IMR-90 (cell line): ENCODE measurements at regions of chr19 and their contacts with region 1.

Region 1: GRCh38 chr19:48513289-48514122 is 1.9 kb upstream of the LMTK3 start:
- DNase-seq: peak; percentile 64
- ATAC-seq: peak; percentile 87
- H3K4me3 ChIP-seq: peak overlapping the region; percentile 57
- H3K27ac ChIP-seq: peak overlapping the region; percentile 13; the same call in 1 of the 2 replicates
- H3K4me1 ChIP-seq: no peaks in the 10 kb centered on the region
- H3K27me3 ChIP-seq: peaks cover 17% of the 10 kb centered on the region
- CTCF ChIP-seq: no peak
- POLR2A ChIP-seq: no peak
- RAD21 ChIP-seq: no peak

Region 2: DNA sequence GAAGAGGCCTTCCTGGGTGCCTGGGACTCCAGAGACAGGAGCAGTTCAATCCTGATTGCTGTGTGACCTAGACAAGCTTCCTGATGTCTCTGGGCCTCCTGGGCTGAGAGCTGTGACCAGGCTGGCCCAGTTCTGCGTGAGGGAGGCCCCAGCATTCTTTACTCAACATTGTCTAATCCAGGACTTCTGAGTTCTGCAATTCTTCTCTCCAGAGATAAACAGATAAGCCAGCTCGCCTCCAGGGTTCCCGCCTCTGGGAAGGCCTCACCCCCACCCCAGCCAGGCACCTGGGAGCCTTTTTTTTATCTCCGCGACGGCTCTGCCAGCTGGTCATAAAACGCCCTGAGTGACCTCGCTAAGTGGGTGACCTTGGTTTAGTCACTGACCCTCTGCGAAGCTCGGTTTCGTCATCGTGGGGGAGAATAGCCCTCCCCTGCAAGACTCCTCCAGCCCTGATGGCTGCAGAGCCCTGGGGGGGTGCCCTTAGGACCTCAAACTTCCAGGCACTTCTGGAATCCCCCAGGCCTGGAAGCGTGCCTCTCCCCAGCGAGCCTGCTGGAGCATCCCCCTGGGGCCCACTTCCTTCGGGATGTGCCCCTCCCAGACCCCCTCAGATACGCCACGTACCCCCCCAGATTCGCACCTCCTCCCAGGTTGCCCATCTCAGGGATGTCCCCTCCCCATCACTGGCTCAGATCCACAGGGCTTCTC is 40.3 kb after region 1 on chr19:
- CTCF ChIA-PET with region 1: no interaction called
- POLR2A ChIA-PET with region 1: no interaction called
- dilution Hi-C with region 1: no loop called
- in situ Hi-C with region 1: no loop called
- intact Hi-C with region 1: loop called (anchors 5 kb)
- DNase-seq: peak; percentile 86
- ATAC-seq: peak; percentile 86
- H3K4me3 ChIP-seq: no peak overlapping the region
- H3K27ac ChIP-seq: no peak overlapping the region
- H3K4me1 ChIP-seq: peaks cover 8% of the 10 kb centered on the region
- H3K27me3 ChIP-seq: peaks cover 5% of the 10 kb centered on the region
- CTCF ChIP-seq: no peak
- POLR2A ChIP-seq: no peak
- RAD21 ChIP-seq: no peak

Region 3: DNA sequence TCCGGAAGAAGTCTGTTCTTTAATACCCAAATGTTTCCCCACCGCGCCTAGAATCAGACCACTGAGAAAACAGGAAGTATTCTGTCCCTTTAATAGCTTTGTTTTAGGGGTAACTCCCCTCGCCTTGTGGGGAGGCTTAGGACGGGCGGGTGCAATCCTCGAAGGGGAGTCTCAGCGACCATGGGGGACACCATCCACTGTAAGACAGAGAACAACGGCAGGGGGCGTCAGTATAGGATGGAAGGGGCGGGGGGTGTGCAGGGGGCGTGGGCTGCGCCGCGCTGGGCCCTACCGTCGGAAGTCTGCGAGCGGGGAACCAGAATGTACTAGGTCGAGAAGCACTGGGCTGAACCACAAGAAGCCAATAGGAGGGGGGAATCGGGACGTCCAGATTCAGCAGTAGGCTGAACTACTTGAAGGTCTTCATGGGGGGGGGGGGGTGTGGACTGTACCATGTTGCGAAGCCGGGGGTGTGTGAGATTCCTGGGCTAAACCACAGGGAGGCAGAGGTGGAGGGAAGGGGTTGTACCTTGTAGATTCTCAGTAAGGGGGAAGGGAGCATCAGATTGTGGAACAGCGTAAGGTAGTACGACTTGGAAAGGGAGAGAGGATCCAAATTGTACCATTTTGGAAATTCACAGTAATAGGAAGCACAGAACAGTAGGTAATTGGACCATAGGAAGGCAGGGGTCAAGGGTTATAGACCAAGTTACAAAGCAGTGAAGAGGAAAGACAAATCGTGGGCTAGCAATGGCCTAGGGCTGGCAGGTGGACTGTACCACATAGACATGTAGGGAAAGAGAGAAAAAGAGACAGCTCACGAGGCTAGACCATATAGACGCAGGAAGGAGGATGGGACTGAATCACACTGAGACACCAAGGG is 124.7 kb after region 1 on chr19:
- CTCF ChIA-PET with region 1: no interaction called
- POLR2A ChIA-PET with region 1: no interaction called
- dilution Hi-C with region 1: no loop called
- in situ Hi-C with region 1: no loop called
- intact Hi-C with region 1: no loop called
- DNase-seq: peak; percentile 96
- ATAC-seq: peak; percentile 45
- H3K4me3 ChIP-seq: peak overlapping the region; percentile 48
- H3K27ac ChIP-seq: peak overlapping the region; percentile 81
- H3K4me1 ChIP-seq: peaks cover 21% of the 10 kb centered on the region
- H3K27me3 ChIP-seq: no peaks in the 10 kb centered on the region
- CTCF ChIP-seq: peak; percentile 27; the same call in 1 of the 2 replicates
- POLR2A ChIP-seq: no peak
- RAD21 ChIP-seq: no peak

Region 4: GRCh38 chr19:48918801-48919247 is 405.3 kb after region 1 on chr19:
- CTCF ChIA-PET with region 1: no interaction called
- POLR2A ChIA-PET with region 1: no interaction called
- dilution Hi-C with region 1: no loop called
- in situ Hi-C with region 1: no loop called
- intact Hi-C with region 1: no loop called
- DNase-seq: no peak
- ATAC-seq: peak; percentile 49
- H3K4me3 ChIP-seq: no peak overlapping the region
- H3K27ac ChIP-seq: no peak overlapping the region
- H3K4me1 ChIP-seq: no peaks in the 10 kb centered on the region
- H3K27me3 ChIP-seq: no peaks in the 10 kb centered on the region
- CTCF ChIP-seq: no peak
- POLR2A ChIP-seq: no peak
- RAD21 ChIP-seq: no peak